Activated T-helper 1 cell treated with anti-CD3 and anti-CD28 coated beads, Interleukin-12 subunit alpha, Interleukin-12 subunit beta, Interleukin-2, Interleukin-4 antibody, amounts not matched to agents 30 ng/mL and 10 ng/mL and 1 ng/mL, durations not matched to agents 14 hours and 24 hours and 36 hours (primary cell): ENCODE measurements at regions of chr6 and their contacts with region 1.

Region 1: GRCh38 chr6:24933868-24934401 is 1.8 kb downstream of the RIPOR2 start:
- DNase-seq: no peak
- H3K4me3 Mint-ChIP-seq: peak overlapping the region; percentile 97
- H3K27ac Mint-ChIP-seq: peak overlapping the region; percentile 96
- H3K4me1 Mint-ChIP-seq: peaks cover 91% of the 10 kb centered on the region
- H3K27me3 Mint-ChIP-seq: no peaks in the 10 kb centered on the region

Region 2: GRCh38 chr6:24855395-24856245 is 78.3 kb before region 1 on chr6:
- intact Hi-C with region 1: loop called (anchors 1 kb)
- DNase-seq: peak; percentile 58
- H3K4me3 Mint-ChIP-seq: no peak overlapping the region
- H3K27ac Mint-ChIP-seq: peak overlapping the region; percentile 88
- H3K4me1 Mint-ChIP-seq: peaks cover 52% of the 10 kb centered on the region
- H3K27me3 Mint-ChIP-seq: no peaks in the 10 kb centered on the region

Region 3: DNA sequence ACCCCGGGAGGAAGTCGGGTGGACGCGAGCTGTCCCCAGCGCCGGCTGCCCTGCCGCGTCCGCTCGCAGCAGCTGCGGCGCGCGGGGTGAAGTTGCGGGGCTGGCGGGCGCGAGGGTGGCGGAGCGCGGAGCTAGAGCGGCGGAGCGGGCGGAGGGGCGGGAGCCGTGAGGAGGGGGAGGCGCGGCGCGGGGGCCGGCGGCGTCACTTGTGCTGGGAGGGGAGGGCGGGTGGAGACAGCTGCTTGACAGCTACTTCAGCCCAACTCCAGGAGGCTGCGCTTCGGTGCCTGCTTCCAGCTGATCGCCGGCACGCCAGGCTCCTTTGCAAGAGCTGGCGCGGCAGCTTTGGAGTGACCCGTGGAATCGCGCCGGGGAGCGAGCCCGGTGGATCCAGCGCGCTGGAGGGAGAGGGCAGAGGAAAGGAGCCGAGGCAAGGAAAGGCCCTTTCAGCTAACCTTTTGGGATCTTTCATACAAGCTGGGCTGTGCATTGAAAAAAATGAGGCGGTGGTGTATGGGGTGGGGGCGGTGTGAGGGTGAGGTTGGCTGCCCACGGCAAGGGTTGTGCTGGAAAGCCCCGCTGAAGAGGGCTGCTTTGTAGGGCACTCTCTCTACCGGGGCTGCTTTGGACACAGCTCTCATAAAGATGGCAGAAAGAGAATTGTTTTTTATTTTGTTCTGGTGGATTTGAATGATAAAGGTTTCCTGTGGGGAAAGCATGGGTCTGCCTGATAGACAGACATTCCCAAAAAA is 22.8 kb before region 1 on chr6:
- intact Hi-C with region 1: loop called (anchors 2 kb)
- DNase-seq: peak; percentile 29
- H3K4me3 Mint-ChIP-seq: peak overlapping the region; percentile 89
- H3K27ac Mint-ChIP-seq: peak overlapping the region; percentile 94
- H3K4me1 Mint-ChIP-seq: peaks cover 91% of the 10 kb centered on the region
- H3K27me3 Mint-ChIP-seq: no peaks in the 10 kb centered on the region

Region 4: DNA sequence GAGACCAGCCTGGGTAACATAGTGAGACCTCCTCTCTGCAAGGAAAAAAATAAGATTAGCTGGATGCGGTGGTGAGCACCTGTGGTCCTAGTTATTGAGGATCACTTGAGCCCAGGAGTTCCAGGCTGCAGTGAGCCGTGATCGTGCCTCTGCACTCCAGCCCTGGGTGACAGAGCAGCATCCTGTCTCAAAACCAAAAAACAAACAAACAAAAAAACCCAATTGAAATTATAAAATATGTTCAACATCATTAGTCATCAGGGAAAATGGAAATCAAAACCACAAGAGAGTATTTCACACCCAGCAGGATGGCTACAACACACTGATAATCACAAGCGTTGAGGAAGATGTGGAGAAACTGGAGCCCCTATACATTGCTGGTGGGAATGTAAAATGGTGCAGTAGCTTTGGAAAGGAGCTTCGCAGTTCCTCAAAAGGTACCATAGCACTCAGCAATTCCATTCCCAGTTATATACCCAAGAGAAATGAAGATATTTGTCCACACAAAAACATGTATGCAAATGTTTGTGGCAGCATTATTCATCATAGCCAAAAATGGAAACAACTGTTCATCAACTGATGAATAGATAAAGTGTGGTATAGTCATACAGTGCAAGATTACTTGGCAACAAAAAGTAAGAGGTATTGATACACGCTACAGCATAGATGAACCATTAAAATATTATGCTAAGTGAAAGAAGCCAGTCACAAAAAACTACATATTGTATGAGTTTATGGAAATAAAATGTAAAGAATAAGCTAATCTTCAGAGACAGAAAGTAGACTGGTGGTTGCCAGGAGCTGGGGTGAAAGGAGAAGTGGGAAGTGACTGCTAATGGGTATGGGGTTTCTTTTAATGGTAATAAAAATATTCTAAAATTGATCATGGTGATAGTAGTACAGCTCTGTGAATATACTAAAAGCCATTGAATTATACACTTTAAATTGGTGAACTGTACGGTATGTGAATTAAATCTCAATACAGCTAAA is 40.5 kb after region 1 on chr6:
- intact Hi-C with region 1: loop called (anchors 1 kb)
- DNase-seq: no peak
- H3K4me3 Mint-ChIP-seq: peak overlapping the region; percentile 34
- H3K27ac Mint-ChIP-seq: peak overlapping the region; percentile 86
- H3K4me1 Mint-ChIP-seq: peaks cover 52% of the 10 kb centered on the region
- H3K27me3 Mint-ChIP-seq: no peaks in the 10 kb centered on the region

Region 5: DNA sequence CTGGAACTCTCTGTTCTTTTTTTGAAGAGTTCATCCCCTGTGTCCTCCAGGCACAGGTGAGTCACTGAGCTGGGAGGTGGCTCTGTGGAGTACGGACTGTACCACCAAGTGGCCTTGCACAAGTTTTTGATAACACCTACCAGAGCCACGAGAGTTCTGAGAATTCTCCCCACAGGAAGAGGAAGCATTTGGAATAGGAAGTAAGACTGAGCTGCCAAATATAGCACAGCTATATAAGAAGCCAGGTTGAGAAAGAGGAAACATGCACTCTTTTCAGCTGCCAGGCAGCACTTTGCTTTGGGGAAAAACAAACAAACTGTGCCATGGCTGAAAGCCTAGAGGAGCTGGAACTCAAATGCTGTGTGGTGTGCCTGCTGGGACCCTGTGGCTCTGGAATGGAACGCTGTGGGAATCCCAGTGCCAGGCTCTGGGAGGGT is 72.6 kb after region 1 on chr6:
- intact Hi-C with region 1: loop called (anchors 1 kb)
- DNase-seq: peak; percentile 55
- H3K4me3 Mint-ChIP-seq: peak overlapping the region; percentile 9
- H3K27ac Mint-ChIP-seq: peak overlapping the region; percentile 87
- H3K4me1 Mint-ChIP-seq: peaks cover 82% of the 10 kb centered on the region
- H3K27me3 Mint-ChIP-seq: no peaks in the 10 kb centered on the region

Region 6: GRCh38 chr6:25070547-25071366 is 136.8 kb after region 1 on chr6:
- intact Hi-C with region 1: loop called (anchors 2 kb)
- DNase-seq: peak; percentile 74
- H3K4me3 Mint-ChIP-seq: no peak overlapping the region
- H3K27ac Mint-ChIP-seq: peak overlapping the region; percentile 86
- H3K4me1 Mint-ChIP-seq: peaks cover 10% of the 10 kb centered on the region
- H3K27me3 Mint-ChIP-seq: peaks cover 3% of the 10 kb centered on the region

Region 7: DNA sequence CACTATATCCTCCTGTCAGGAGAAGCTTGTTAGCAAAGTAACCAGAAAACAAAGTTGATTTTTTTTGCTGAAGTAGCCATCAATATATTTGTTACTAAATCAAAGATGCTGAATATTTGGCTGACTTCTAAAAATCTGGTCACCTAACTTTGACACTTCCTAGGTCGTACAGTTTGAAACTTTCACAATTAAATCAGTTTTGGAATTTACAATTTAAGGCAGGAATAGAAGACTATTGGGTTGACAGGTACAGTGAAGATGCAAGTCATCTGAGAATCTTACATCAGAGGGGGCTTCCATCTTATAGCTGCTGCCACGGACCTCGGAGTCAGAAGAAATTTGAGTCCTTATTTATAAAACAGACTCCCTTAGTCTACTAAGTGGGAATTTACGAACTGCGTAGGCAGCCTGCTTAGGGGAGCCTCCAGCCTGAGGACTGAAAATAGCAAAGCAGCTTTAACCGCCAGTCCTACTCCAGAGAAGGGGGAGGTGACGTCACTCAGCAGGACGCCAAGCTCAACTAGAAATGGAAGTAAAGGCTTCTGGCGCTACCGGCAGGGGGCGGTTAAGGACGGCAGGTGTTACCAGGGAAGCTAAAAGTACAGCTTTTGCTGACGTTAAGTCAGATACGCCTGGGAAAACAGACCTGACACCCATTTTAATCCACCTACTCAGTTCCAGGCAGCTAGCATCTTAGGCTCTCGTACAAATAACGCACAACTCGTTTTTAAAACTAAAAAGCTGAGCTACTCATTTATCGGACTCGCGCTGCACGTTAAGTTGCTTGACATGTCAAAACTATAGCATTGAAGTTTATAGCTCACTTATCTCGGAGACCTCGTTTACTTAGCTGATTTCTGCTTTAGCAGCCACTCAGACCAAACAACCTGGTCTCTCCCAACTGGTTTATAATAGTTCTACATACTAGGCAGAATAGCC is 1092.2 kb after region 1 on chr6:
- intact Hi-C with region 1: loop called (anchors 10 kb)
- DNase-seq: peak; percentile 88
- H3K4me3 Mint-ChIP-seq: peak overlapping the region; percentile 85
- H3K27ac Mint-ChIP-seq: peak overlapping the region; percentile 96
- H3K4me1 Mint-ChIP-seq: peaks cover 93% of the 10 kb centered on the region
- H3K27me3 Mint-ChIP-seq: no peaks in the 10 kb centered on the region